ENCODE measurements at regions of chr6 and their contacts with region 1.

Region 1: DNA sequence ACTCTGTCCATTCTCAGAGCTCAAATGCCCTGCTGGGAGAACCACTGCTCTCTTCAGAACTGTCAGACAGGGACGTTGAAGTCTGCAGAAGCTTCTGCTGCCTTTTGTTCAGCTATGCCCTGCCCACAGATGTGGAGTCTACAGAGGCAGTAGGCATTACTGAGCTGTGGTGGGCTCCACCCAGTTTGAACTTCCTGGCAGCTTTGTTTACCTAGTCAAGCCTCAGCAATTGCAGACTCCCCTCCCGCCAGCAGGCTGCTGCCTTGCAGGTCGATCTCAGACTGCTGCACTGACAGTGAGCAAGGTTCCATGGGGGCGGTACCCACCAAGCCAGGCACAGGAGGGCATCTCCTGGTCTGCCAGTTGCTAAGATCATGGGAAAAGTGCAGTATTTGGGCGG is 21.8 kb upstream of the UFL1 start:
- DNase-seq: peak; percentile 47 to 88 (median 70)
- H3K4me3 ChIP-seq: peak overlapping the region; percentile 41
- H3K4me3 Mint-ChIP-seq: peak overlapping the region; percentile 40 to 75 (median 60)
- H3K27ac ChIP-seq: no peak overlapping the region
- H3K27ac Mint-ChIP-seq: peak overlapping the region; percentile 69 to 92 (median 83)
- H3K4me1 ChIP-seq: peaks cover 14% of the 10 kb centered on the region
- H3K4me1 Mint-ChIP-seq: peaks cover 38 to 49% (median 44%) of the 10 kb centered on the region in 3 donors
- H3K27me3 ChIP-seq: no peaks in the 10 kb centered on the region
- H3K27me3 Mint-ChIP-seq: peaks cover 0 to 9% of the 10 kb centered on the region in 2 donors

Region 2: DNA sequence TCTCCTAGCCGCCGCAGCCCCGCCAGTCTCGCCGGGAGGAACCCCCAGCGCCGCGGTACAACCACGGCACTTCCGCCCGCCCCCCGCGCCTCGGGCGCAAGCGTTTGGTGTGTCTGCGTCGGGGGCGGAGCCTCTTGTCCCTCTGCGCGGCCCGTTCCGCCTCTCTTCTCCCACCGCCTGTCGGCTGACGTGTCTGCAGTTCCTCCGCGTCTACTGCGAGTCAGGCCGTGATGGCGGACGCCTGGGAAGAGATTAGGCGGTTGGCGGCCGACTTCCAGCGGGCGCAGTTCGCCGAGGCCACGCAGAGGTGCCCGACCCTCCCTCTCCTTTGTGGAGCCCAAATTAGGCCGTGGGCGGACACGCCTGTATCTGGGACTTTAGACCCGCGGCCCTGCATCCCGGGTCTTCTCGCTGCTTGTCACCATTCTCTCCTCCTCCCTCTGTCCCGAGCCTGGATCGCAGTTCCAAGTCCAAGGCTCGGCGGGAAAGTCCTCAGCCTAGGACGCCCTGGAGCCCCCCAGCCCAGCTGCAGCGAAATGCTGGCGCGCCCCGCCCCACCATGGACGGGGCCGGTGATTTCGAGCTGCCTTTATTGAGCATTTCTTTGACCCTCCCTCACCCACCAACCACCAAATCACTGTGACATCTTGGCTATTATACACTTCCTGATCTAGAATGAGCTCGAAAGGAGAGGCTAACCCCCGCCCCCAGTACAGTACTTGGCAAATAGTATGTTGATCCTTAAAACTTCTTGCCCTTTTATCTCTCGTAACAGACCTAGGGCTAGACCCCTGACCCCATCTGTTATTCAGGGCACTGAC is 22.1 kb after region 1 on chr6 and contains the start of gene UFL1:
- CTCF ChIA-PET with region 1: interaction called, 12 read pairs
- POLR2A ChIA-PET with region 1: interaction called, 12 read pairs
- DNase-seq: peak; percentile 92 to 97 (median 94)
- H3K4me3 ChIP-seq: peak within 1 kb of the TSS; percentile 93
- H3K4me3 Mint-ChIP-seq: peak within 1 kb of the TSS; percentile 98 to 100 (median 99)
- H3K27ac ChIP-seq: peak within 1 kb of the TSS; percentile 97
- H3K27ac Mint-ChIP-seq: peak within 1 kb of the TSS; percentile 99 to 100 (median 100)
- H3K4me1 ChIP-seq: peaks cover 36% of the 10 kb centered on the region
- H3K4me1 Mint-ChIP-seq: peaks cover 33 to 52% (median 47%) of the 10 kb centered on the region in 3 donors
- H3K27me3 ChIP-seq: no peaks in the 10 kb centered on the region
- H3K27me3 Mint-ChIP-seq: no peaks in the 10 kb centered on the region
- total RNA-seq, gene UFL1: 22.5 to 23.4 TPM

Region 3: GRCh38 chr6:96542702-96543101 is 42.9 kb after region 1 on chr6:
- CTCF ChIA-PET with region 1: interaction called, 10 read pairs
- POLR2A ChIA-PET with region 1: no interaction called
- DNase-seq: peak in 1 of 5 donors; percentile 19
- H3K4me3 ChIP-seq: no peak overlapping the region
- H3K4me3 Mint-ChIP-seq: no peak overlapping the region
- H3K27ac ChIP-seq: no peak overlapping the region
- H3K27ac Mint-ChIP-seq: peak overlapping the region in 2 of 8 donors; percentile 3 to 59
- H3K4me1 ChIP-seq: no peaks in the 10 kb centered on the region
- H3K4me1 Mint-ChIP-seq: peaks cover 0 to 2% (median 0%) of the 10 kb centered on the region in 3 donors
- H3K27me3 ChIP-seq: no peaks in the 10 kb centered on the region
- H3K27me3 Mint-ChIP-seq: no peaks in the 10 kb centered on the region

Measured in CD8-positive, alpha-beta memory T cell (primary cell).